A549 (cell line): ENCODE measurements at regions of chr2 and their contacts with region 1.

Region 1: GRCh38 chr2:74328074-74328473 is 15.1 kb downstream of the SLC4A5 start:
- DNase-seq: no peak
- ATAC-seq: no peak
- H3K4me3 ChIP-seq: no peak overlapping the region
- H3K27ac ChIP-seq: no peak overlapping the region
- H3K4me1 ChIP-seq: no peaks in the 10 kb centered on the region
- CTCF ChIP-seq: no peak
- EP300 ChIP-seq: no peak
- POLR2A ChIP-seq: no peak
- RAD21 ChIP-seq: no peak

Region 2: GRCh38 chr2:74316627-74317295 is 11.3 kb before region 1 on chr2:
- CTCF ChIA-PET with region 1: interaction called, 11 read pairs
- POLR2A ChIA-PET with region 1: no interaction called
- DNase-seq: no peak
- ATAC-seq: no peak; a peak in 1 of 6 replicates
- H3K4me3 ChIP-seq: no peak overlapping the region
- H3K27ac ChIP-seq: no peak overlapping the region
- H3K4me1 ChIP-seq: no peaks in the 10 kb centered on the region
- CTCF ChIP-seq: no peak
- EP300 ChIP-seq: no peak
- POLR2A ChIP-seq: no peak
- RAD21 ChIP-seq: no peak

Region 3: DNA sequence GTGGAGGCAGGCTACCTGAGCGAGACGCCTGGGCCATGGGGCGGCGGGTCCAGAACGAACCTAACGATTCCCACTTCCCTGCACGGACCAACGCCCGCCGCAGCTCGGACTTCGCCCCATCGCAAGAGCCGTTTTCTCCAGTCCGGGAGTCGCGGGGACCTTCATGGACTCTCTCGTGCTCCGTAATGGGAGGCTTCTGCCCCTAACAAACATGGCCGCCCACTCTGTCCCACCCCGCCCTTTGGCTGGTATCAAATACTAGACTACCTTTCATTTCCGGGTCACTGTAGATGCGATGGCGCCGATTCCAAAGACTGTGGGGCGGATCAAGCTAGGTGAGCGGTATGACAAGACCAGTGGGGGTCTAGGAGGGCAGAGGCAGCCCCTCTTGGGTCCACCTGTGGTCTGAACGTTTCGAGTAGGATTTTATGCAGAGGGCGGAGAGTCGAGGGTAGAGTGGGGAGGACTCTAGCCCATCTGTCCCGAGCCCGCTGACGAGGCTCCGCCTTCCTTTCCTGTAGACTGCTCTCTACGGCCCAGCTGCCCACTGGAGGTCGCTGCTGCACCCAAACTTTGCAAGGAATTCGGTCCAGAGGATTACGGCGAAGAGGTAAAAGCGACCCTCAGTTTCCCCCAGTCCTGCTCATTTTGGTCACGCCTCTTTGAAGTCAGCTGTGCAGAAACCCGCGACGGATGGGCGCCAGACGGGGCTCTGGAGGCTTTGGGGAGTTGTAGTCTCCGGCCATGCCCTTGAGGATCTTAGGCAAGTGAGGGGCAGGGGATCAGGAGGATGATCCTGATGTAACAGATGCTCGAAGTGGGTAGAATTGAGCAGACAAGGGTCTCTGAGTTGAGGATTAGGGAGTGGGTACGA is 155.0 kb after region 1 on chr2 and contains the starts of genes CCDC142 and TTC31:
- CTCF ChIA-PET with region 1: no interaction called
- POLR2A ChIA-PET with region 1: no interaction called
- DNase-seq: peak; percentile 95 to 97
- ATAC-seq: peak; percentile 96 to 97
- H3K4me3 ChIP-seq: peak within 1 kb of the TSS; percentile 70
- H3K27ac ChIP-seq: peak within 1 kb of the TSS; percentile 85 to 97
- H3K4me1 ChIP-seq: peaks cover 20% of the 10 kb centered on the region
- CTCF ChIP-seq: peak; percentile 98
- EP300 ChIP-seq: no peak
- POLR2A ChIP-seq: peak; percentile 49
- RAD21 ChIP-seq: peak; percentile 76 to 86
- polyA plus RNA-seq, gene CCDC142: 6.8 and 8.9 TPM in 2 replicates
- polyA plus RNA-seq, gene TTC31: 29.6 and 32.4 TPM in 2 replicates